Heart left ventricle (tissue), 16 donors: ENCODE measurements at regions of chr2 and their contacts with region 1.

Region 1: DNA sequence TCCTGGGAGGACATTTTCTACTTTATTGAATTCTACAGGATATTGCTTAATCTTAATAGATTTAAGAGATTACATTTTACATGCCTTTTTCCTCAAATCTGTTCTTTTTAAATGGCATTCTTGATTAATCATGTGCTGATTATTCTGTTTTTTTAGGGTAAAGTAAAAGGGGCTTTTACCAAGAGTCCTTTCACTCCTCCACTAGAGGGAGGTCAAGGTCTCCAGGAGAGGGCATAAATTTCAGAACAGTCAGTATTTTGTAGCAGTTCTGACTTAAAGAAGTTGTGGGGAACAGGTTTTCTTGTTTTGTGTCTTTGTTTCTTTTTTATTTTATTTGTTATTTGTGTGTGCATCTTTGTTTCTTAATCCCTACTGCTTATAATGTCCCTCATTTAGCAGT is 25.4 kb downstream of the WDR75 start:
- DNase-seq: no peak
- ATAC-seq: peak in 3 of 4 donors; percentile 59 to 64 (median 62)
- H3K4me3 ChIP-seq: no peak overlapping the region
- H3K27ac ChIP-seq: no peak overlapping the region
- H3K4me1 ChIP-seq: peaks cover 0 to 16% (median 0%) of the 10 kb centered on the region in 12 donors
- H3K27me3 ChIP-seq: no peaks in the 10 kb centered on the region
- CTCF ChIP-seq: peak; percentile 50 to 79 (median 70)
- POLR2A ChIP-seq: no peak

Region 2: DNA sequence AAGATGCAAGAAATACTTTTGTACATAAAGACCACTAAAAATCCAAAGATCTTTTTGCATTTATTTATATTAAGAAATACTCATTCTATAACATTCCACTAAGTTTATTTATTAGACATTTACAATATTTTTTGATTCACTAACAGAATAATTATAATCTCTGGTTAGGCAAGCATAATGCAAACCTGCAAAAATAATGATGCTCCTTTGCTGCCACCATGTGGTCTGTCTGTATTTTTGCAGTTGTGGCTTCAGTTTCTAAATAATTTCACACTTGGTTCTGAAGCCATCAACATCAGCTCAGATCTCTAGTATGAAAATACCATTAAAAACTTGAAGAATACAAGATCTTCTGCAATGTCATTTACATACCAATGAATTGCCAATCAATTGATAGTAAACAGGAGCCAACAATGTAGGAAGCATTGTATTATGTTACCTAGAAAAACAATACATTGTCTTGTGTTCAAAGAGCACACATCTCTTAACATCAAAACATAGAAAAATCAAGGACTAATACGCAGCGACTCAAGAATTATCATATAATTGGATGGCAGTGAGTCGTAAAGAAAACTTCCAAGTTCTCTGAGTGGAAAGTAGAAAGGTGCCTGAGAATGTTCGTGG is 54.2 kb before region 1 on chr2:
- intact Hi-C with region 1: no loop called
- DNase-seq: peak in 1 of 5 donors; percentile 23
- ATAC-seq: peak in 3 of 4 donors; percentile 50 to 72 (median 54)
- H3K4me3 ChIP-seq: no peak overlapping the region
- H3K27ac ChIP-seq: peak overlapping the region in 7 of 12 donors; percentile 2 to 73 (median 45)
- H3K4me1 ChIP-seq: peaks cover 0 to 18% (median 1%) of the 10 kb centered on the region in 12 donors
- H3K27me3 ChIP-seq: no peaks in the 10 kb centered on the region
- CTCF ChIP-seq: peak; percentile 55 to 84 (median 72)
- POLR2A ChIP-seq: no peak

Region 3: GRCh38 chr2:189498205-189498604 is 31.5 kb after region 1 on chr2:
- intact Hi-C with region 1: no loop called
- DNase-seq: peak in 1 of 5 donors; percentile 32
- ATAC-seq: peak in 1 of 4 donors; percentile 37
- H3K4me3 ChIP-seq: no peak overlapping the region
- H3K27ac ChIP-seq: no peak overlapping the region
- H3K4me1 ChIP-seq: peaks cover 0 to 6% (median 0%) of the 10 kb centered on the region in 12 donors
- H3K27me3 ChIP-seq: no peaks in the 10 kb centered on the region
- CTCF ChIP-seq: peak in 8 of 12 donors; percentile 18 to 52 (median 27)
- POLR2A ChIP-seq: no peak

Region 4: DNA sequence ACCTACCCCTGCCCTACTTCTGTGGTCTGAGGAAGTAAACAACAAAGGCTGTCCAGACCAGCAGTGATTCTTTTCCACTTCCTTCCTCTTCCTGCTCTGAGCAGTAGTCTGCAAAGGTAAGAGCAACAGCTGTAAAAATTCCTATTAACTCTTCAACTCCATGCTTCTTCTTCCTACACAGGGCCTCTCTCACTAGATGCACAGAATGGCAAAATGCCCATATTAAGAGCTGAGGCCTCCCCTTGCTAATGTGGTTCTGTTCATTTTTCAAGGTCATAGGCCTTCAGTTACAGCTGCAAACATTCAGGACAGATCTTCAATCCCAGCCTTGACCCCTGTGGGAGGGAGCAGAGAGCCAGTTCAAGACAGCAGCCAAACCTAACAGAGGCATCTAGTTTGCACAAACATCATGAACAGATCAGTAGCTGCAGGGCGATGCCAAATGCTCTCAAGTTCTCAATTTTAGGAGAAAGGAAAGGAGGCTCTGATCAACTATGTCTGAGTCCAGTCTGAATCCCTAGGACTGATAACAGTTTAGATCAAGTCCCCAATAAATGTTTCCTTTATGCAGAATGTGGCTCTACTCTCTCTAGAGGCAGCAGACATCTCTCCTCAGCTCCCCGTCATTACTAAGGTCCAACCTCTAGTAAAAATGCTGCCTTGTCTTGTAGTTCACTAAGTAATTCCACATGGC is 93.1 kb after region 1 on chr2:
- intact Hi-C with region 1: loop called in 2 of 10 experiments (anchors 5 kb)
- DNase-seq: peak; percentile 31 to 68 (median 52)
- ATAC-seq: peak in 3 of 4 donors; percentile 72 to 85 (median 75)
- H3K4me3 ChIP-seq: no peak overlapping the region
- H3K27ac ChIP-seq: peak overlapping the region in 10 of 12 donors; percentile 10 to 64 (median 42)
- H3K4me1 ChIP-seq: peaks cover 6 to 74% (median 48%) of the 10 kb centered on the region in 12 donors
- H3K27me3 ChIP-seq: no peaks in the 10 kb centered on the region
- CTCF ChIP-seq: no peak
- POLR2A ChIP-seq: no peak

Region 5: GRCh38 chr2:189569295-189569910 is 102.7 kb after region 1 on chr2:
- intact Hi-C with region 1: loop called in 4 of 10 experiments (anchors 5 to 10 kb)
- DNase-seq: peak in 1 of 5 donors; percentile 39
- ATAC-seq: peak in 2 of 4 donors; percentile 59 to 72
- H3K4me3 ChIP-seq: no peak overlapping the region
- H3K27ac ChIP-seq: peak overlapping the region in 10 of 12 donors; percentile 19 to 65 (median 46)
- H3K4me1 ChIP-seq: peaks cover 3 to 80% (median 29%) of the 10 kb centered on the region in 12 donors
- H3K27me3 ChIP-seq: no peaks in the 10 kb centered on the region
- CTCF ChIP-seq: peak in 5 of 12 donors; percentile 17 to 44 (median 26)
- POLR2A ChIP-seq: no peak

Region 6: DNA sequence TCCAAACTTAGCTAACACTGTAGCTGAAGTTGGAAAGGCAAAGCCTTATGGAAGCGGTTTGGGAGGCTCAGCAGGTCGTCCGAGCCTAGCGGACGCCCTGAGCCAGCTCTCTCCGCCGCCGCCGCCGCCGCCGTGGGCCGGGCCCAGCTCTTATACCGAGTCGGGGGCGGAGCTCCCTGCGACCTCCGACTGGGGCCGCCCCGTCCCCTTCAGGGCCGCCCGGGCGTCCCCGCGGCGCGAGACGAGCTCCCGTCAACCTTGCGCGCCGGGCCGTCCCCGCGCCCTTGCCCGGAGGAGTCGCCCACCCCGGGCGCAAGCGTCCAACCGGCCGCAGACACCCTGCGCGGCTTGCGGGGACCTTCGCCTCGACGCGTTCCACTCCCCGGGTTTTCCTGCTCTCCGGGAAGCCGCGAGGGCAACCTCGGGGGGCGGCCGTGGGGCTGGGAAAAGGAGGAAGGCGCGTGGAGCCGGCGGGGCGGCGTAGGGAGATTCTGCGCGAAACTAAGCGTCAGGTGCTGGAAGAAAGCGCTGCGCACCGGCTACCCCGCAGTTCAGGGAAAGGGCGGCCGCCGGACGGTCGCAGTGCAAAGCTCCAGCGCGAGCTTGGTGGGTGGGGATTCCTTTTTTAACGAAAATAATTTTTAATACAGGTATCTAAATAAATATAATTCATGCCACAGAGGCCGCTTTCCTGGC is 114.1 kb after region 1 on chr2 and contains the start of gene SLC40A1:
- intact Hi-C with region 1: loop called in 5 of 10 experiments (anchors 5 to 10 kb)
- DNase-seq: peak; percentile 88 to 94 (median 89)
- ATAC-seq: peak; percentile 96 to 99 (median 98)
- H3K4me3 ChIP-seq: peak within 1 kb of the TSS; percentile 22 to 89 (median 75)
- H3K27ac ChIP-seq: peak within 1 kb of the TSS; percentile 90 to 99 (median 96)
- H3K4me1 ChIP-seq: peaks cover 0 to 68% (median 40%) of the 10 kb centered on the region in 12 donors
- H3K27me3 ChIP-seq: no peaks in the 10 kb centered on the region
- CTCF ChIP-seq: peak in 1 of 12 donors; percentile 17
- POLR2A ChIP-seq: peak in 1 of 2 donors; percentile 93
- total RNA-seq, gene SLC40A1: 21.9 to 109 (median 42.9) TPM

Region 7: DNA sequence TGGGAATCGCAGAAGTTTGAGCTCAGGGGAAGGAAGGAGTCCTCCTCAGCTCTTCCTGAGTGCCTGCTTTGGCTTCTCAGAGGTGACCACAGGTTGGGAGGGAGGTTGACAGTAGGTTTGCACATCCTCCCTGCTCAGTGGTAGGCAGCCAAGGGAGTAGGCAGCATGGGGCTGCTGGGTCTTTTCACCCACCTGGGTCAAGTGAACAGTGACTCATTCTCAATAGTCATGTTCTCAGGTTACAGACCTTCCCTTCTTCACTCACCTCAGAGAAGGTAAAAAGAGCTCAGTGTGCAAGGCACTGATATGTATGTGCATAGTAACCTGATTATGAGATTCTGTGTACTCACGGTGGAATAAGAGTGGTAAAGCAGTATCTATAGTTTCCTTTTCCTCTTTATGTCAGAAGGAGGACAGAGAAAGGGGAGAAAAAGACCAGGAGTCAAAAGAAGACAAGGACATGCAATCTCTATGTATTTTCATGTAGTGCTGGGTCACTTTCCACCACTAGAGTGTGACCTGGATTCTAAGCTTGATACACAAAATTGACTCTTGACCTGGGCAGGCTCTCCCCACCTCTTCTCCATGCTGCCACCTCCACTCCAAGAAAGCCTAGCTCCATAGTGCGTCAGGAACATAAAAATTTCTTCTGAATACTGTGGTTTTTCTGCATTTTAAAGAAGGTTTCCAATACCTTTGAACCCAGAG is 158.1 kb after region 1 on chr2:
- intact Hi-C with region 1: loop called in 8 of 10 experiments (anchors 2 to 5 kb)
- DNase-seq: no peak
- ATAC-seq: no peak
- H3K4me3 ChIP-seq: no peak overlapping the region
- H3K27ac ChIP-seq: no peak overlapping the region
- H3K4me1 ChIP-seq: peaks cover 0 to 8% (median 0%) of the 10 kb centered on the region in 12 donors
- H3K27me3 ChIP-seq: no peaks in the 10 kb centered on the region
- CTCF ChIP-seq: no peak
- POLR2A ChIP-seq: no peak

Region 8: DNA sequence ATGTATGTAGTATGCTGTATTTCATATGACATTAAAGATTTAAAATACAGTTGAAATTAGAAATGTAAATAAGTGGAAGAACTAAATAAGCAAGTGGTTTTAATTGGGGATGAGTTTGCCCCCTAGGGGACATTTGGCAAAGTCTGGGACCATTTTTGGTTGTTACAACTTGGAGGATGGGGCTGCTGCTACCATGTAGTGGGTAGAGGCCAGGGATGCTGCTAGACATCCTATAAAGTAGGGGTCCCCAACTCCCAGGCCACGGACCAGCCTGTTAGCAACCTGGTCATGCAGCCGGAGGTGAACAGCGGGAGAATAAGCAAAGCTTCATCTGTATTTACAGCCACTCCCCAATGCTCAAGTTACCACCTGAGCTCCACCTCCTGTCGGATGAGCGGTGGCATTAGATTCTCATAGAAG is 166.7 kb after region 1 on chr2:
- intact Hi-C with region 1: loop called in 9 of 10 experiments (anchors 2 to 5 kb)
- DNase-seq: no peak
- ATAC-seq: peak in 1 of 4 donors; percentile 41
- H3K4me3 ChIP-seq: no peak overlapping the region
- H3K27ac ChIP-seq: no peak overlapping the region
- H3K4me1 ChIP-seq: peaks cover 0 to 11% (median 0%) of the 10 kb centered on the region in 12 donors
- H3K27me3 ChIP-seq: no peaks in the 10 kb centered on the region
- CTCF ChIP-seq: peak; percentile 23 to 60 (median 50)
- POLR2A ChIP-seq: no peak

Region 9: GRCh38 chr2:190959911-190960788 is 1493.5 kb after region 1 on chr2:
- intact Hi-C with region 1: no loop called
- DNase-seq: no peak
- ATAC-seq: peak in 1 of 4 donors; percentile 14
- H3K4me3 ChIP-seq: no peak overlapping the region
- H3K27ac ChIP-seq: no peak overlapping the region
- H3K4me1 ChIP-seq: peaks cover 0 to 10% (median 0%) of the 10 kb centered on the region in 12 donors
- H3K27me3 ChIP-seq: no peaks in the 10 kb centered on the region
- CTCF ChIP-seq: no peak
- POLR2A ChIP-seq: no peak